Psoas muscle (tissue), 8 donors: ENCODE measurements at regions of chr15 and their contacts with region 1.

Region 1: DNA sequence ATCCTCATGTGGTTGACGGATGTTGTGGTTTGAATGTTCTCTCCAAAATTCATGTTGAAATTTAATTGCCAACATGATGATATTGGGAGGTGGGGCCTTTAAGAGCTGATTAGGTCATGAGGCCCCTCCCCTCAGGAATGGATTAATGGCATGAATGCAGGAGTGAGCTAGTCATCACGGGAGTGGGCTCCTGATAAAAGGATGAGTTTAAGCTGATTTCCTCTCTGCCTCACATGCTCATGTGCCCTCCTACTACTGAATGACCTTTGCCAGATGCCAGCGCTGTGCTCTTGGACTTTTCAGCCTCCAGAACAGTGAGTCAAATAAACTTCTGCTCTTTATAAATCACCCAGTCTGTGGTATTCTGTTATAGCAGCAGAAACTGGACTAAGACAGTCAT is 111.2 kb downstream of the MYO5A start:
- DNase-seq: no peak
- ATAC-seq: peak in 2 of 4 donors; percentile 33 to 37
- H3K4me3 ChIP-seq: no peak overlapping the region
- H3K27ac ChIP-seq: no peak overlapping the region
- H3K4me1 ChIP-seq: peaks cover 4% of the 10 kb centered on the region
- H3K27me3 ChIP-seq: no peaks in the 10 kb centered on the region
- CTCF ChIP-seq: no peak

Region 2: GRCh38 chr15:52227456-52227855 is 190.1 kb before region 1 on chr15:
- intact Hi-C with region 1: no loop called
- DNase-seq: peak in 1 of 2 donors; percentile 50
- ATAC-seq: peak; percentile 87 to 95 (median 91)
- H3K4me3 ChIP-seq: no peak overlapping the region
- H3K27ac ChIP-seq: no peak overlapping the region
- H3K4me1 ChIP-seq: no peaks in the 10 kb centered on the region
- H3K27me3 ChIP-seq: no peaks in the 10 kb centered on the region
- CTCF ChIP-seq: peak; percentile 81

Region 3: GRCh38 chr15:52481915-52482314 is 64.4 kb after region 1 on chr15:
- intact Hi-C with region 1: loop called in 1 of 2 experiments (anchors 10 kb)
- DNase-seq: no peak
- ATAC-seq: peak; percentile 70 to 91 (median 81)
- H3K4me3 ChIP-seq: no peak overlapping the region
- H3K27ac ChIP-seq: peak overlapping the region; percentile 71
- H3K4me1 ChIP-seq: peaks cover 43% of the 10 kb centered on the region
- H3K27me3 ChIP-seq: no peaks in the 10 kb centered on the region
- CTCF ChIP-seq: no peak

Region 4: DNA sequence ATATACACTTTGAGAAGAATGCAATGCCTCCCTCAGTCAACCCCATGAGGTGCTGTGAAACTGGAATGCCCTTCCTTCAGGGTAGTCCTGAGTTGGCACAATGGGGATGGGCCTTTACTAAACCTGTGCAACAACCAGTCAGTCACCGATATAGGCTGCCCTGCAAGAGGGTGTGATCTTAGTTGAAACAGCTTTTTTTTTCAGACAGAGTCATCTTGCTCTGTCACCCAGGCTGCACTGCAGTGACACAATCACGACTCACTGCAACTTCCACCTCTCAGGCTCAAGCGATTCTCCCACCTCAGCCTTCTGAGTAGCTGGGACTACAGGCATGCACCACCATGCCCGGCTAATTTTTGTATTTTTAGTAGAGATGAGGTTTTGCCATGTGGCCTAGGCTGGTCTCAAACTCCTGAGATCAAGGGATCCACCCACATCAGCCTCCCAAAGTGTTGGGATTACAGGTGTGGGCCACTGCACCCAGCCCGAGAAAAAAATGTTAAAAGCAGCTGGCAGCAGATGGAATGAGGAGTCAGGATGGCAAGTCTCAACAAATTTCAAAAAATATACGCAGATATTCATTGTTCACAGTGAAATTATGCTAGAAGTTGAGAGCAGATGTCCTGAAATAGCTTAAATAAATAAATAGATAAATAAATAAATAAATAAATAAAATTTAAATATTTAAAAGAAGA is 79.4 kb after region 1 on chr15:
- intact Hi-C with region 1: no loop called
- DNase-seq: no peak
- ATAC-seq: peak; percentile 49 to 72 (median 65)
- H3K4me3 ChIP-seq: no peak overlapping the region
- H3K27ac ChIP-seq: no peak overlapping the region
- H3K4me1 ChIP-seq: peaks cover 18% of the 10 kb centered on the region
- H3K27me3 ChIP-seq: no peaks in the 10 kb centered on the region
- CTCF ChIP-seq: no peak